ENCODE measurements at regions of chr13 and their contacts with region 1.

Region 1: DNA sequence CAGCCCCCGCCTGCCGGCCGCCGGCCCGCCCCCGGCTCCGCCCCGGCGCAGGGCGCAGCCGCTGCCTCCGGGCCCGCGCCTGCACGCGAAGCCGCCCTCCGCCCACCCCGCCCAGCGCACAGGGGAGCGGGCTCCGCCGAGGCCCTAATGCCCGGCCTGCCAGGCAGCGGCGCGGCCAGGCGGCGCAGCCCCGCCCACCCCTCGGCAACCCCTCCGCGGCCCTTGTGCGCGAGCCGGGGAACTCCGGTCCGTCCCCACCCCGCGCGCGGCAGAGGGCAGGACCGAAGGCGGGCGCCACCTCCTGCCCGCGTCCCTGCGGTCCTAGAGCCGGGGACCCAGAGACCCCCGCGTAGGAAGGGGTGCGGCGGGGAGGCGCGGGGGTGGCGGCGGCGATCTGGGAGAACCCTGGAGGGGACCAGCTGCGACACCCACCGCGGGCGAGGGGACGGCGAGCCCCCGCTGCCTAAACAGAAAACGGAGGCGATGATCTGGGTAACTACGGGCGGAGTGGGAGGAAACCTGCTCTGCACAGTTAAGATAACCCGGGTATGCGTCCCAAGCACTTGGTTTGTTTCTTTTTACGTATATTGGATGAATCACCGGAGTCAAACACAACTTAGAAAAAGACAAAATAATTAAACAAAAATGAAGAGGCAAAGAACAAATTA is 350 bp upstream of the USP12 start:
- DNase-seq: peak; percentile 74 to 93
- H3K4me3 ChIP-seq: peak overlapping the region; percentile 90
- H3K27ac ChIP-seq: peak overlapping the region; percentile 61
- H3K4me1 ChIP-seq: peaks cover 28% of the 10 kb centered on the region
- H3K27me3 ChIP-seq: no peaks in the 10 kb centered on the region
- CTCF ChIP-seq: no peak

Region 2: GRCh38 chr13:27043013-27043412 is 128.9 kb before region 1 on chr13:
- CTCF ChIA-PET with region 1: no interaction called
- POLR2A ChIA-PET with region 1: interaction called, 10 read pairs
- intact Hi-C with region 1: no loop called
- DNase-seq: peak; percentile 74 to 94
- H3K4me3 ChIP-seq: no peak overlapping the region; the same call in 1 of the 2 replicates
- H3K27ac ChIP-seq: peak overlapping the region; percentile 62
- H3K4me1 ChIP-seq: peaks cover 28% of the 10 kb centered on the region
- H3K27me3 ChIP-seq: no peaks in the 10 kb centered on the region
- CTCF ChIP-seq: no peak

Region 3: GRCh38 chr13:27242706-27243105 is 70.7 kb after region 1 on chr13:
- CTCF ChIA-PET with region 1: no interaction called
- POLR2A ChIA-PET with region 1: no interaction called
- intact Hi-C with region 1: no loop called
- DNase-seq: peak in 1 of 2 experiments; percentile 67
- H3K4me3 ChIP-seq: no peak overlapping the region
- H3K27ac ChIP-seq: no peak overlapping the region
- H3K4me1 ChIP-seq: peaks cover 17% of the 10 kb centered on the region
- H3K27me3 ChIP-seq: no peaks in the 10 kb centered on the region
- CTCF ChIP-seq: no peak